SK-N-SH (cell line): ENCODE measurements at regions of chr2 and their contacts with region 1.

Region 1: GRCh38 chr2:105114551-105114950 is 76.7 kb downstream of the MRPS9 start:
- DNase-seq: peak; percentile 81
- H3K4me3 ChIP-seq: no peak overlapping the region
- H3K27ac ChIP-seq: no peak overlapping the region
- H3K4me1 ChIP-seq: peaks cover 0 to 10% of the 10 kb centered on the region in 2 experiments; a peak in 1 of 4 replicates
- H3K27me3 ChIP-seq: no peaks in the 10 kb centered on the region
- CTCF ChIP-seq: peak; percentile 86
- EP300 ChIP-seq: no peak
- RAD21 ChIP-seq: peak; percentile 94

Region 2: DNA sequence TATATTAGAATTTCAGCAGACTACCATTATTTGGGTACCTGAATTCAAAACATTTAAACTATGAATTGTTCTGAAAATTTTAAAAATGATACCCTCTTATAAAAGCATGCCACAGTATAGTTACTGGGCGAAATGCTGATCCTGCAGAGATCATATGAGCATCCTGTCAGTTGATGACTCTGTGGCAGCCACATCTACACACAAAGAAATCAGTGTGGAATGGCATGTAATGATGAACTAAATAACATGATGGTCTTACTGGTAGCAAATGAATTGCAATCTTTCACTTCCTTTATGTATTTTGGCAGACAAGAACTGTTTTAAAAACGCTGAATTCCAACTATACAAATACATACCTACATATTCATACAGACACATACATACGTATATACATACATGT is 38.4 kb before region 1 on chr2:
- CTCF ChIA-PET with region 1: no interaction called
- POLR2A ChIA-PET with region 1: no interaction called
- DNase-seq: no peak
- H3K4me3 ChIP-seq: no peak overlapping the region
- H3K27ac ChIP-seq: no peak overlapping the region
- H3K4me1 ChIP-seq: peaks cover under 1 to 1% of the 10 kb centered on the region in 2 experiments; a peak in 2 of 4 replicates
- H3K27me3 ChIP-seq: no peaks in the 10 kb centered on the region
- CTCF ChIP-seq: no peak
- EP300 ChIP-seq: no peak
- RAD21 ChIP-seq: no peak

Region 3: GRCh38 chr2:105102963-105103421 is 11.6 kb before region 1 on chr2:
- CTCF ChIA-PET with region 1: interaction called, 36 read pairs
- POLR2A ChIA-PET with region 1: no interaction called
- DNase-seq: no peak
- H3K4me3 ChIP-seq: no peak overlapping the region
- H3K27ac ChIP-seq: 0 out of 4 replicates have a peak overlapping the region, but pooled peaks of 1 of the 2 experiments have one; percentile 57
- H3K4me1 ChIP-seq: no peaks in the 10 kb centered on the region; a peak in 1 of 4 replicates
- H3K27me3 ChIP-seq: no peaks in the 10 kb centered on the region
- CTCF ChIP-seq: no peak
- EP300 ChIP-seq: peak in 1 of 2 experiments; percentile 65; a peak in 1 of 4 replicates
- RAD21 ChIP-seq: no peak

Region 4: DNA sequence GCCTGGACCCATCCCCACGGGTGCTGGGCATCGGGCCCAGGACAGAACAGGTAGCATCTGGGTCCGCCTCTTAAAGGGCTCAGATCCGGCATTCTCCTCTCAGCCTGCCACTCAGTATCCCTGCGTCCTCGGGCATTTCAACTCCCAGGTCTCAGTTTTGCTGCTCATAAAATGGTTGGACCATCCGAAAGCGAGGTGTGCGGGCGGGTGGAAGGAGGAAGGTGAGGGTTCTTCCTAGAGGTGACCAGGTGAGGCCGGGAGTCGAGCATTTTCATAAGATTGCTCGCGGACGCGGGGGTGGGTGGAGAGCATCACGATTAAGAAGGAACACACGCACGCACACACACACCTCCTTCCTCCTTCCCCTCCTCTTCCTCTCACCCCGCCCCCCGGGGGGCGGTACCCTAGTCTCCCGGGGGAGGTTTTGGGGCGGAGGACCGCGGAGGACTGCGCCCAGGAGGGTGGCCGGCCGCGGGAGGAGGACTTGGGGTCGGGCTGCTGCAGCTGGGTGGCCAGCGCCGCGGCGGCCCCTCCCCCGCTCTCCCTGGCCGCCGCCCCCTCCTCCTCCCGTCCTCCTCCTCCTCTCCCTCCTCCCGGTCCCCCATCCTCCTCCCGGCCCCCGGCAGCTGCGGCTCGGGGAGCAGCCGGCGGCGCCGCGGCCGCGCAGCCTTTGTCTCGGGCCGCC is 29.1 kb after region 1 on chr2:
- CTCF ChIA-PET with region 1: interaction called, 31 read pairs
- POLR2A ChIA-PET with region 1: no interaction called
- DNase-seq: peak; percentile 90
- H3K4me3 ChIP-seq: peak overlapping the region; percentile 8 to 49; a peak in 3 of 4 replicates
- H3K27ac ChIP-seq: no peak overlapping the region; a peak in 1 of 4 replicates
- H3K4me1 ChIP-seq: peaks cover 0 to 10% of the 10 kb centered on the region in 2 experiments; a peak in 1 of 4 replicates
- H3K27me3 ChIP-seq: peaks cover 18% of the 10 kb centered on the region; the same call in 1 of the 2 replicates
- CTCF ChIP-seq: no peak
- EP300 ChIP-seq: no peak
- RAD21 ChIP-seq: no peak

Region 5: GRCh38 chr2:105235388-105236054 is 121.0 kb after region 1 on chr2:
- CTCF ChIA-PET with region 1: interaction called, 459 read pairs
- POLR2A ChIA-PET with region 1: interaction called, 7 read pairs
- DNase-seq: peak; percentile 72
- H3K4me3 ChIP-seq: peak overlapping the region in 1 of 2 experiments; percentile 17; a peak in 2 of 4 replicates
- H3K27ac ChIP-seq: peak overlapping the region in 1 of 2 experiments; percentile 81; a peak in 2 of 4 replicates
- H3K4me1 ChIP-seq: peaks cover 0 to 20% of the 10 kb centered on the region in 2 experiments; a peak in 3 of 4 replicates
- H3K27me3 ChIP-seq: no peaks in the 10 kb centered on the region
- CTCF ChIP-seq: peak; percentile 87
- EP300 ChIP-seq: no peak
- RAD21 ChIP-seq: peak; percentile 82

Region 6: DNA sequence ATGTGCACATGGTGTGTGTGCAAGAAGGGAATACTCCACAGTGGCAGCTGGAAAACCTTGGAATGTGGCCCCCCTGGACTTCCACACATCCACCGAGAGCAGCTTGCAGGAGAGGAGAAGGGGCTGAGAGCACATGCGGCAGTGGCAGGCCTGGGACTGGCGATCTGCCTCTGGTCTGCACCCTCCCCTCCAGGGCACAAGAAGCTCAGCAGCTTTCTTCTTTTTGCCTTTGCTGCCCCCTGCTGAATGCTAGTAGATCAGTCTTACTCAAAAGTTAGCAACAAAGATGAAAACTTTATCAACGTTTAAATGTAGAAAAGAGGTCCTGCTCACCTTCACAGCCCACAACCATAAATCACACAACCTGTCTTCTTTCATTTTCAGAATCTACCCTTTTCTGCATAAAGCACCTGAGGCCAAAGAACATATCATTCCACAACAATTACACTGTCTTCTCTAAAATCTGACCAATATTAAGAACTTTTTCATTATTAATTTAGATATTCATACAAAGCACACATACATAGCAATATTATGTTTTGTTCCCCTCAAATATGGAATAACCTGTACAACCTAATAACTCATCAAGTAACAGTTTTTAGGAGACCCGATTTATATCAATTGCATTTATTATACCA is 180.4 kb after region 1 on chr2:
- CTCF ChIA-PET with region 1: interaction called, 42 read pairs
- POLR2A ChIA-PET with region 1: no interaction called
- DNase-seq: peak; percentile 82
- H3K4me3 ChIP-seq: no peak overlapping the region
- H3K27ac ChIP-seq: no peak overlapping the region
- H3K4me1 ChIP-seq: peaks cover 0 to 3% of the 10 kb centered on the region in 2 experiments; a peak in 1 of 4 replicates
- H3K27me3 ChIP-seq: no peaks in the 10 kb centered on the region
- CTCF ChIP-seq: peak; percentile 73
- EP300 ChIP-seq: no peak
- RAD21 ChIP-seq: peak; percentile 82

Region 7: DNA sequence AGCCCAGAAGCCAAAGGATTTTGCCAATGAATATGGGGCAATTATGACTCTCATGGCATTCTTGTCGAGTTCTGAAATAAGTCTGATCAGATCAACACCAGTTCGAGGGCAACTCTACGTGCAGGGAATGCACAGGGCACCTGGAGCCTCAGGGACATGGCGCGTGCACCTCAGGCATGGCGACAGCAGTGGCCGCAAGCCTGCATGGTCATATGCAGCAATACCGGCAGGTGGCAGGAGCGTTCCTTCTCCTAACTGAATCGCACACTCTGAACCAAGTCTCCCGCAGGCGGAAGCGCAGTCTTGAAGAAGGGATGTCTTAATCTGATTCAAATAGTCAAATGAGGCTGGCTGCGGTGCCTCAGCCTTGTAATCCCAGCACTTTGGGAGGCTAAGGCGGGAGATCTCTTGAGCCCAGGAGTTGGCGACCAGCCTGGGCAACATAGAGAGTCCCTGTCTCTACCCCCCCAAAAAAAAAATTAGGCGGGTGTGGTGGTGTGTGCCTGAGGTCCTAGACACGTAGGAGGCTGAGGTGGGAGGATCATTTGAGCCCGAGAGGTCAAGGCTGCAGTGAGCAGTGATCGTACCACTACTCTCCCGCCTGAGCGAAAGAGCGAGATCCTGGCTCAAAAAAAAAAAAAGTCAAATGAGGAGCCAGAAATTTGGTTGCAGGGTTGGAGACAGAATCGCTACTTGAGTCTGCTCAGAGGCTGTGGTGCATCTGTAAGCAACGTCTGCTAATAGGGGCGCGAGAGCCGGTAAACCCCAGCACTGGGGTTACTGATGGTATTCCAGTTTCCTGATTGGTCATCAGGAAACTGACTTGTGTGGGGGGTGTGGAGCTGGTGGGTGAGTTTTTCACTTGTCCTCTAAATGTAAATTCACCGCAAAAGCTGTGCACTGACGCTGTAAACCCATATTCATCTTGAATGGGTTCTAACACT is 255.5 kb after region 1 on chr2:
- CTCF ChIA-PET with region 1: no interaction called
- POLR2A ChIA-PET with region 1: no interaction called
- DNase-seq: peak; percentile 75
- H3K4me3 ChIP-seq: no peak overlapping the region
- H3K27ac ChIP-seq: no peak overlapping the region
- H3K4me1 ChIP-seq: peaks cover 0 to 4% of the 10 kb centered on the region in 2 experiments; a peak in 1 of 4 replicates
- H3K27me3 ChIP-seq: no peaks in the 10 kb centered on the region
- CTCF ChIP-seq: peak; percentile 84
- EP300 ChIP-seq: no peak
- RAD21 ChIP-seq: peak; percentile 98